OCI-LY7 (cell line): ENCODE measurements at regions of chr6 and their contacts with region 1.

Region 1: DNA sequence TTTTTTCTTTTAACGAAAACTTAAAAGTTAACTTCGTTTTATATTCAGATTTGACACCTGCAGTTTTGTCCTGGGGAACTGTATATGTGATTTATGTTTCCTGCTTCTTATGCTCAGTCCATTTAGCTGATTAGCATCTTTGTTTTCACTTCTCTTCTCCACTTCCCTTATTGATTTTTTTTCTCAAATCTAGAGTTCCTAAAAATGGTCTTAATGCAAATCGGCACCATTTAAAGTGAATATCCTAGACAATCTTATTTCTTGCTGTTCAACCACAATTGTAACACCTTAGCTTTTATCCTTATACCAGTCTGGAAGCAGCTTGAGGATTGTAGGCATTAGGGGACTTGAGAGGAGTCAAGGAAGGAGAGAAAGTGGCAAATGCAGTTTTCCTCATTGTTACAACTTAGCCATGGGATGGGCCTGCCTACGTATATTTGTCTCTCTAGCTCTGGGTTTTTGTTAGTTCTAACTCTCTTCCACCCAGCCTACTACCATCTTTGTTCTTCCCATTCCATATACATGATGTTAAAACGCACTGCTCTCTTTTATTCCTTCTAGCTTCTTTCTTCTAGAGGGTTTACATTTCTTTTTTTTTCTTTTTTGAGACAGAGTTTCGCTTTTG is 8.5 kb downstream of the QRSL1 start:
- DNase-seq: peak; percentile 90
- H3K4me3 ChIP-seq: peak overlapping the region; percentile 57
- H3K27ac ChIP-seq: peak overlapping the region; percentile 99
- H3K4me1 ChIP-seq: peaks cover 84% of the 10 kb centered on the region
- CTCF ChIP-seq: no peak

Region 2: DNA sequence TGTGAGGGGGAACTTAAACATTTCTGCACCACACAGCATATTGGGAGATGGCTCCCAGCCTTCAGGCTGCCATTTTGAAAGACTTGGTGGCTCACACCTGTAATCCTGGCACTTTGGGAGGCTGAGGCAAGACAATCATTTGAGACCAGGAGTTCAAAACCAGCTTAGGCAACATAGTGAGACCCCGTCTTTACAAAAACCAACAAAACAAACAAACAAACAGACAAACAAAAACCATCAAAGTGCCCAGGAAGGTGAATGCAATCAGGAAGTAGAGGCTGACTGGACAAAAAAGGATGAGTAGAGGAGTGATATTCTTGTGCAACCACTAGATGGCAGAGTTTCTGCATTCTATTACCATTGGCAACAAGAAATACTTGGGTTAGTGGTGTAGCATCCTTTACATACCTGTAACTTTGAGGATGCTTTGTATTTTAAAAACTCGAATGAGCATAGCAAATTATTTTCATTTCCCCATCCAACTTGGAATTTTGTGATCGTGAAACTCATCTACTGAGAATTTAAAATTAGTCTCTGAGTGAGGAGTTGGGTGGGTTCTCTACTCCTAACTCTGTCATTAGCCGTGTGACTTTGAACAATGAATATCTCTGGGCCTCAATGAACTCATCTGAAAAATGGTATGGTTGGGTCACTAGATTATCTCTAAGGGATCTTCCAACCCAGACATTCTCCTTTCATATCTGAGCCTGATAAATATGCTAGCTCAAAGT is 192.9 kb before region 1 on chr6:
- CTCF ChIA-PET with region 1: no interaction called
- POLR2A ChIA-PET with region 1: no interaction called
- intact Hi-C with region 1: no loop called
- DNase-seq: peak; percentile 85
- H3K4me3 ChIP-seq: no peak overlapping the region
- H3K27ac ChIP-seq: no peak overlapping the region
- H3K4me1 ChIP-seq: no peaks in the 10 kb centered on the region
- CTCF ChIP-seq: peak; percentile 94

Region 3: GRCh38 chr6:106519460-106520394 is 118.1 kb before region 1 on chr6:
- CTCF ChIA-PET with region 1: no interaction called
- POLR2A ChIA-PET with region 1: interaction called, 10 read pairs
- intact Hi-C with region 1: no loop called
- DNase-seq: peak; percentile 90
- H3K4me3 ChIP-seq: peak overlapping the region; percentile 72
- H3K27ac ChIP-seq: peak overlapping the region; percentile 95
- H3K4me1 ChIP-seq: peaks cover 79% of the 10 kb centered on the region
- CTCF ChIP-seq: no peak

Region 4: DNA sequence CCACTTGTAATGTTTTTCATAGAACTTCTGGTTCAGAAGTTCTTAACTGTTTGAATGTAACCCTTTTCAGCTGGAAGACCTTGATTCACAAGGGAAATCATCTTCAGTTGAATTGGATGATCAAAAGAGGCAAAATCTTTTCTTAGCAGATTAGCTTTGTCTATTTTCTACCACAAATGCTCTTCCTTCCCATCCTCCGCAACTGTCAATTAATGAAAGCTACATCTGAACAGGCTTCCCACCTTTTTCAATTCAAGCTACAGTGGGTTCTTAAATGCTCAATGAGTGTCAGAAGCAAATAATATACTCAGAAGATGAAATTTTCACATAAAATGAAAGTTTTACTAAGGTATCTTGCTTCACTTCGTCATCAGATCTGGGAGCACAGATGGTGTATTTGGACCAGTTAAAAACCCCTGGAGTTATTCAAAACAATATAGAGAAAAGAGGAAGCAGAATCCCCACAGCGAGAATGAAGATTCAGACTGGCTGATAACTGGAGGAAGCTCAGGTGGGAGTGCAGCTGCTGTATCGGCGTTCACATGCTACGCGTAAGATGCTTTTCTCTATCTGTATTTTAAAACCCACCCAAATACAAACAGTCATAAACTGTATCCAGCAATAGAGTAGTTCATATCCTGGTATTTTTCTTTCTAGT is 11.0 kb after region 1 on chr6:
- CTCF ChIA-PET with region 1: interaction called, 5 read pairs
- POLR2A ChIA-PET with region 1: interaction called, 140 read pairs
- intact Hi-C with region 1: no loop called
- DNase-seq: peak; percentile 91
- H3K4me3 ChIP-seq: peak overlapping the region; percentile 73
- H3K27ac ChIP-seq: peak overlapping the region; percentile 96
- H3K4me1 ChIP-seq: peaks cover 49% of the 10 kb centered on the region
- CTCF ChIP-seq: no peak